ENCODE measurements at regions of chr3 and their contacts with region 1.

Region 1: GRCh38 chr3:156626104-156626503 is 48.3 kb upstream of the TIPARP start:
- DNase-seq: peak; percentile 92
- H3K4me3 ChIP-seq: no peak overlapping the region
- H3K27ac ChIP-seq: no peak overlapping the region
- H3K4me1 ChIP-seq: peaks cover 44% of the 10 kb centered on the region
- H3K27me3 ChIP-seq: no peaks in the 10 kb centered on the region
- CTCF ChIP-seq: no peak

Region 2: DNA sequence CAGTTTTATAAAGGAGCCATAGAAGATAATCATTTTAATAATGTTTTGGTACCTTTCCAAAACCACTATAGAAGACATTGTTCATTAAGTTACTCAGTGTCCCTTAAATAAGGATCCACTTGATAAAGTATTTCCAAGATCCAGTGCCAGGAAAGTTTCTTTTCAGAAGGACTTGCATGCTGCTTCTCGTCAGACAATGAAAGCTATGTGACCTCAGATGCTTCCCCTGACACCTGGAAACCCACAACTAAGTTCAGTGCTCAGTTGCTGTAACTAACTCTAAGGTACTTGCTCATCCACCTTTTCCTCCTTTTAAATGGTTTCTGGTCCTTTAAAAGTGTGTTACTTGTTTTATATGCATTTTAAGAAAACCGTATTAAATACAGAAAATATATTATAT is 78.5 kb before region 1 on chr3:
- CTCF ChIA-PET with region 1: no interaction called
- dilution Hi-C with region 1: loop called (anchors 5 kb)
- in situ Hi-C with region 1: no loop called
- intact Hi-C with region 1: no loop called
- DNase-seq: peak; percentile 83
- H3K4me3 ChIP-seq: peak overlapping the region in 2 of 3 experiments; percentile 8 to 24
- H3K27ac ChIP-seq: peak overlapping the region; percentile 89
- H3K4me1 ChIP-seq: peaks cover 63% of the 10 kb centered on the region
- H3K27me3 ChIP-seq: no peaks in the 10 kb centered on the region
- CTCF ChIP-seq: no peak

Region 3: DNA sequence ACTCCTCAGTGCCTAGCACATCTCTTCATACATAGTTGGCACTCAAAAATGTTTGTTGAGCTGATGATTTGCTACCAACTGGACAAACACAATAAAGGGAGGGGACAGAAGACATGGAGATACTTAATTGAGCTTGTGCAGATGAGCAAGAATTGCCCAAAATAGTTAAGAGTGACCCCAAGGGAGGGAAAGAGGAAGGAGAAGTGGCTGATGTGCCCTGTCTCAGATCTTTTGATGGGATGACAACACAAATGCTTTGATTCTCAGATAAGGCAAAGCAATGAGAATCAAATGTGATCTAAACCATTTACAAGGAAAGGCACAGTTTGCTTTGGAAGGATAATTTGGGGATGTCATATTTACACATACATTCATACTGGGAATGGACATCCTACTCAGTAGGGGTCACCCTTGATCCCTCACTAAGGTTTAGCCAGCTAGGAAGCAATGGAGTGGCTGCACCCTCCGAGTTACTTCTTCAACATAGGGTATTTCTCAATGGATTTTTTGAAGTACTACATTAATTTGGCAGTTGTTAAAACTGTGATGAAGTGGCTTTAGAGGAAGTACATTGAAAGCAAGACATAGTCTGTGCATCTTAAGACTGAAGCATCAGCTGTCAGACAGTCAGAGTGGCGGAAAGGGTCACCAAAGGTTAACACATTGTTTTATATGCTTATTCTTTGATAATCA is 49.3 kb before region 1 on chr3:
- CTCF ChIA-PET with region 1: interaction called, 14 read pairs
- dilution Hi-C with region 1: no loop called
- in situ Hi-C with region 1: no loop called
- intact Hi-C with region 1: no loop called
- DNase-seq: no peak
- H3K4me3 ChIP-seq: no peak overlapping the region
- H3K27ac ChIP-seq: no peak overlapping the region
- H3K4me1 ChIP-seq: peaks cover 8% of the 10 kb centered on the region
- H3K27me3 ChIP-seq: no peaks in the 10 kb centered on the region
- CTCF ChIP-seq: peak in 1 of 2 donors; percentile 13

Measured in mammary epithelial cell (primary cell).